Panc1 (cell line): ENCODE measurements at regions of chr17 and their contacts with region 1.

Region 1: DNA sequence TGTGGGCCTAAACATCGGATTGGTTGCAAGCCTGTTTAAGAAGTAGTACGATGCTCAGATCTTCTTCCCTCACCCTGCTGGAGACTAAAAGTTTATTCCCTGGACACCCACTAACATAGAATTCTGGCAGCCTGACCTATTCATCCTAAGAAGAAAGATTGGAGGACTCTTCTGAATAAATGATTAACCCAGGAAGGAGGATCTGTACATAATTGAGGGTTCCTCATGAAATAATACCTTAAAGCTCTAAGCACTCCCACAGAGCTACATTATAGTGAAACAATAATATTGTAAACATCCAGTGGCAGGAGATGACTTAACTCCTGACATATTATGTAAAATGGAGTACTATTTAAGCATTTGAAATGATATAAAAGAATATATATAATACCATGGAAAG is 111.8 kb downstream of the NLK start:
- DNase-seq: no peak
- ATAC-seq: no peak
- H3K4me3 ChIP-seq: no peak overlapping the region
- H3K27ac ChIP-seq: no peak overlapping the region
- H3K4me1 ChIP-seq: no peaks in the 10 kb centered on the region
- H3K27me3 ChIP-seq: no peaks in the 10 kb centered on the region
- CTCF ChIP-seq: no peak

Region 2: DNA sequence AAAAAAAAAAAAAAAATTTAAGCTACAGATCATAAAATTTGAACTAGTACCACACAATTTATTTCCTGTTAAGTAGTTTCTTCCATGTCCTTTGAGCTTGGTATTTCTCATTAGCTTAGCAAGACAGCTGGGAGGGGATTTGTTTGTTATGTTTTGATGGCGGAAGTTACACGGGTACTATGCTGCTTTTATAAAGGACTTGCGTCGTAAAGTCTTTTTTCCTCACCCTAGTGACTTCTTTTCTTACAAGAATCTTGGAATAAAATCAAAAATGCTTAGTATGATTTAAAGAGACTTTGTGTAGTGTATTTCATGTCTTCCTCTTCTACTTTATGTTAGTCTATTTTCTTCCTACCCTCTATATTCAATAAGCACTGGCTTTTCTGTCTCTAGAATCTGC is 22.6 kb before region 1 on chr17:
- CTCF ChIA-PET with region 1: no interaction called
- POLR2A ChIA-PET with region 1: interaction called, 11 read pairs
- in situ Hi-C with region 1: no loop called
- intact Hi-C with region 1: no loop called
- DNase-seq: no peak
- ATAC-seq: no peak
- H3K4me3 ChIP-seq: no peak overlapping the region
- H3K27ac ChIP-seq: no peak overlapping the region
- H3K4me1 ChIP-seq: no peaks in the 10 kb centered on the region
- H3K27me3 ChIP-seq: no peaks in the 10 kb centered on the region
- CTCF ChIP-seq: no peak

Region 3: GRCh38 chr17:28169621-28170349 is 15.5 kb after region 1 on chr17:
- CTCF ChIA-PET with region 1: no interaction called
- POLR2A ChIA-PET with region 1: no interaction called
- in situ Hi-C with region 1: no loop called
- intact Hi-C with region 1: no loop called
- DNase-seq: no peak
- ATAC-seq: no peak
- H3K4me3 ChIP-seq: no peak overlapping the region
- H3K27ac ChIP-seq: no peak overlapping the region
- H3K4me1 ChIP-seq: peaks cover 3% of the 10 kb centered on the region; the same call in 1 of the 2 replicates
- H3K27me3 ChIP-seq: no peaks in the 10 kb centered on the region
- CTCF ChIP-seq: no peak

Region 4: GRCh38 chr17:29042679-29043538 is 888.7 kb after region 1 on chr17 and contains the start of gene PIPOX:
- CTCF ChIA-PET with region 1: no interaction called
- POLR2A ChIA-PET with region 1: no interaction called
- in situ Hi-C with region 1: no loop called
- intact Hi-C with region 1: no loop called
- DNase-seq: no peak
- ATAC-seq: no peak
- H3K4me3 ChIP-seq: no peak within 1 kb of the TSS
- H3K27ac ChIP-seq: no peak within 1 kb of the TSS
- H3K4me1 ChIP-seq: no peaks in the 10 kb centered on the region; the same call in 1 of the 2 replicates
- H3K27me3 ChIP-seq: peaks cover 4% of the 10 kb centered on the region
- CTCF ChIP-seq: no peak
- total RNA-seq, gene PIPOX: 2.4 TPM